ENCODE measurements at regions of chr6 and their contacts with region 1.

Region 1: GRCh38 chr6:99393698-99394531 is at the start of gene COQ3:
- DNase-seq: peak; percentile 89

Region 2: GRCh38 chr6:99330159-99330558 is 63.8 kb before region 1 on chr6:
- CTCF ChIA-PET with region 1: interaction called, 15 read pairs
- POLR2A ChIA-PET with region 1: interaction called, 12 read pairs
- DNase-seq: peak; percentile 67

Region 3: GRCh38 chr6:99349171-99350141 is 44.5 kb before region 1 on chr6 and contains the start of gene FAXC:
- CTCF ChIA-PET with region 1: no interaction called
- POLR2A ChIA-PET with region 1: interaction called, 41 read pairs
- DNase-seq: peak; percentile 66

Region 4: DNA sequence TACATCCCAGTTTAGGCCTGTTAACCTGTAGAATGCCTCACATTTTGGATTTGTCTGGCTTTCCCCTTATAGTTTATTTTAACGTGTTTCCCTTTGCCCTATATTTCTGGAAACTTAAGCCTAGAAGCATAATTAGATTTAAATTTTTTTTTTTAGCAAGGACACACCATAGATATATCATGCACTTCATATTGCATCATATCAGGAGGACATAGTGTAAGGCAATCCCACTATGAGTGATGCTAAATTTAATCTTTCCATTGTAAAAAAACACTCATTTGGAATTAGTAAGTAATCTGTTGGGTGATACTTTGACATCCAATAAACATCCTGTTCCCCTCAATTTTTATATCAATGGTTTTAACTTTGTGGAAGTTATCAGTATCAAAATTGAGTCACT is 34.1 kb before region 1 on chr6:
- CTCF ChIA-PET with region 1: no interaction called
- POLR2A ChIA-PET with region 1: interaction called, 10 read pairs
- DNase-seq: no peak

Region 5: DNA sequence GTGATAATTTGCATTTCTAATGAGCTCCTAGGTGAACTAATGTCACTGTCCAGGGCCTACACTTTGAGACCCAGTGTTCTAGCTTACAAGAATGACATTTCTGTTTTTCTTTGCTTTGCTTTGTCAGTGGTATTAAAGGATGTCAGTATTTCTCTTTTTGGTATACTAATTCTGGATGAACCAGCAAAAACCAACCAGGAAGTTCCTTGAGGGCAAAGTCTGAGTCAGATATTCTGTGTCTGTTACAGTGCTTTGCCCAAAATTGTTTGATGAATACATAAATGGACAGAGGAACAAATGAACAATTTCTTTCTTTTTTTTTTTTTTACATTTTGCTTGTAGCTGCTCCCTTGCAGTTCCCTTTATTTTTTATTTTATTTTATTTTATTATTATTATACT is 15.3 kb before region 1 on chr6:
- CTCF ChIA-PET with region 1: interaction called, 3 read pairs
- POLR2A ChIA-PET with region 1: interaction called, 10 read pairs
- DNase-seq: no peak

Region 6: DNA sequence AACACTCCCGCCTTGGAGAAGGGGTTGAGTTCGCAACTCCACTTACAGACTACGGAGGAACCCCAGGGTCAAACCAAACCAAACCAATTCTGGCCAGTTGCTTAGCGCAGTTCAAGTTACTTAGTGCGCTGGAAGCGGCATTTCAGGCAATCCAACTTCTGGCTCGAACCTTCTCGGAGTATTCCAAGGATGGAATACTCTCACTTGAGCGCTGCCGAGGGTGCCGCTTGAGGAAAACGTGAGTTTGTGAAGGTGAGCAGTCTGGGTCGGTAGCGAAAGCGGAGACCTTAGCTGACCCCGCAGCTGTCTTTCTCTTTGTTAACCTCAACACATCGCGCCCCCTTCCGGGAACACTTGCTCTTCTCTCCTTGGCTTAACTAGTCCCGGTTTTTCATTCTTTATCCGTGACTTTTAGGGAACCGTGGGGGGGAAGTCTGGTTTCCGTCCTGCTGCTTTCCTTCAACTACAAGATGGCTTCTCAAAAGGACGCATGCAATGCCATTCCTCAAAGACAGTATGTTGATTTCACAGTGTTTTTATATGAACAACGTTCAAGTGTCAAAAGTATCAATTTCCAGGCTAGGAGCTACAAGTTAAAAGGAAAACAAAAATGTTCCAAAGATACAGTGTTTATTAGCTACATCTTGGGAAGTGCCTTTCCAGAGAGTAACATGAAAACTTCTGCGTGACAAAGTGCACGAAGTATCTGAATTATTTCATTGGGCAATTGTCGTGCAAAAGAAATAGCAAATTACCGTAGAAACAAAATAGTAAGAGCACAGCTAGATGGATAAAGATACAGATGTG is 31.9 kb after region 1 on chr6:
- CTCF ChIA-PET with region 1: interaction called, 4 read pairs
- POLR2A ChIA-PET with region 1: interaction called, 66 read pairs
- DNase-seq: peak; percentile 65

Region 7: DNA sequence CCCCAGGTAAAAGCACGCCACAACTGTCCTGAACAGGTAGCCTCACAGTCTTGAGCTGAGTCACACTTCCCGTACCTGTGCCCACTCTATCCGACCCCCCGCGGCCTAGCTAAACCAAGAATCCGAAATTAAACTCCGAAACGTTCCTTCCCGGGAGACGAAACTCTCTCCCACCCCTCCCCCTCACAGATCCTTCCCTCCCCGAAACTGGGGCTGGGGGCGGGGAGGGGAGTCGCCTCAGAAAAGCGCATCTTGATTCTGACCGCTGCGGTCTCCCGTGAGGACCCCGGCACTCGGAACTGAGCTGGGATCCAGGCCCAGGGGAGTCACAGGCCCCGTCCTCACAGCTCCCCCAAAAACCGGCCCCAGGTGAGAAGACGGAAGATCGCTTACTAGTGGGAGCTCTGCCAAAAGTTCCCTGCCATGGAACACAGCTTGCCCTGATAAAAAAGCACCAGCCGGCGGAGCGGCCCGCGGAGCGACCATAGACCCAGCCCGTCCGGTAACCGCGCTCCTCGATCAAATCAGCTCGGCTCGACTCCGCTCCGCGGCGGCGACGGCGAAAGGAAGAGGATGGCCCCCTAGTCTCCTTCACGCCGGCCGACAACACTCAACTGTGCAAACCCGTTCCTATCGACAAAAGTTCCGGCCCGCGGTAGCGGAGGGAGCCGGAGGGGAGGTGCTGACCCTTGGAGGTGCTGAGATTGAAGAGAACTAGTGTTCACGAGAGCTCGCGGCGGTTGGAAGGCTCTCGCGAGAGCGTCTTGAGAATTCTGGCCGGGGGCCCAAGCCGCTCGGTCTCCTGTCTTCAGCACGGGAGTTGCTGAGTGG is 174.4 kb after region 1 on chr6 and contains the start of gene CCNC:
- CTCF ChIA-PET with region 1: no interaction called
- POLR2A ChIA-PET with region 1: interaction called, 11 read pairs
- DNase-seq: peak; percentile 91

Region 8: GRCh38 chr6:101013612-101014195 is 1619.8 kb after region 1 on chr6:
- CTCF ChIA-PET with region 1: no interaction called
- POLR2A ChIA-PET with region 1: no interaction called
- DNase-seq: no peak